ENCODE measurements at regions of chr7 and their contacts with region 1.

Region 1: DNA sequence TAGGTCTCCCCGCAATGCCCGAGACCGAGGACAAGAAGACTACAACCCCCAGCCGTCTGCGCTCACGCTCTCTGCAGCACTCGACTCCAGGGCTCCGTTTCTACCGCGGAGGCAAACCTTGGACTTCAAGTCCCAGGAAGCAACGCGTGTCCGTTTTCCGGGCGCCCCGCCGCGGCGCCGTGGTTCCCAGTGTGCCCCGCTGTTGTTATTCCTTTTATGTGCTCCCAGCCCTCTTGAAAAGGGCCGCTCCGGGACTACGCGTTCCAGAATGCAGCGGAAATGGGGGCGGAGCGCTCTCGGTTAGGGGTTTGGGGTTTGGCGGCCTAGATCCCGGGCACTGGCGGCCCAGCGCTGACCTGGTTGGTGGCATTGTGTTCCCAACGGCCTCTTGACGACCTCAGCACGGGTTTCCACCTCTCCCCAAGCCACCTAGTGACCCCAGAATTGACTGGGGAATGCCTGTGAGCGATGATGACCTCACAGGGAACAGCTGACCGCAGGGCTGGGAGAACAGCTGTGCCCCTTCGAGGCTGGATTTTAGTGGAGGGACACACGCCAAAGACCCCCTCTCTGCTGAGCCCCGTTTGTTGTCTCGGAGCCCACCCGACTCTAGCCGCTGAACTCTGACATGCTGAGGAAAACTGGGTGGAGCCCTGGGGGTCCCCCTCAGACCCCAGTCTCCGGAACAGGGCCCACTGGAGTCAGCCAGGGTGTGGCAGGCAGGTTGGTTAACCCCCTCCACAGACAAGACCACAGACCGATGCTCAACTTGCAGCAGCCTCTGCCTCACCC is 488 bp upstream of the CDK5 start:
- DNase-seq: peak; percentile 80 to 99 (median 97)
- ATAC-seq: peak; percentile 96
- H3K4me3 ChIP-seq: peak overlapping the region; percentile 78
- H3K4me3 Mint-ChIP-seq: peak overlapping the region; percentile 91 to 99 (median 94)
- H3K27ac ChIP-seq: peak overlapping the region; percentile 92
- H3K27ac Mint-ChIP-seq: peak overlapping the region; percentile 86 to 96 (median 93)
- H3K4me1 ChIP-seq: peaks cover 25 to 32% of the 10 kb centered on the region in 2 donors
- H3K4me1 Mint-ChIP-seq: peaks cover 25 to 41% (median 38%) of the 10 kb centered on the region in 7 donors
- H3K27me3 ChIP-seq: no peaks in the 10 kb centered on the region
- H3K27me3 Mint-ChIP-seq: no peaks in the 10 kb centered on the region

Region 2: GRCh38 chr7:149838224-149838947 is 1219.8 kb before region 1 on chr7 and contains the start of gene ZNF862:
- CTCF ChIA-PET with region 1: no interaction called
- POLR2A ChIA-PET with region 1: no interaction called
- intact Hi-C with region 1: loop called in 1 of 2 experiments (anchors 1 kb)
- DNase-seq: peak; percentile 84 to 96 (median 94)
- ATAC-seq: peak; percentile 99
- H3K4me3 ChIP-seq: peak within 1 kb of the TSS; percentile 67
- H3K4me3 Mint-ChIP-seq: peak within 1 kb of the TSS; percentile 85 to 97 (median 91)
- H3K27ac ChIP-seq: peak within 1 kb of the TSS; percentile 79
- H3K27ac Mint-ChIP-seq: peak within 1 kb of the TSS; percentile 77 to 96 (median 88)
- H3K4me1 ChIP-seq: peaks cover 12 to 22% of the 10 kb centered on the region in 2 donors
- H3K4me1 Mint-ChIP-seq: peaks cover 25 to 52% (median 48%) of the 10 kb centered on the region in 7 donors
- H3K27me3 ChIP-seq: no peaks in the 10 kb centered on the region
- H3K27me3 Mint-ChIP-seq: peaks cover 0 to 15% (median 3%) of the 10 kb centered on the region in 5 donors
- total RNA-seq, gene ZNF862: 36.9 to 112 (median 41.8) TPM

Region 3: GRCh38 chr7:150378853-150379440 is 679.2 kb before region 1 on chr7 and contains the start of gene ZNF775:
- CTCF ChIA-PET with region 1: no interaction called
- POLR2A ChIA-PET with region 1: no interaction called
- intact Hi-C with region 1: loop called in 1 of 2 experiments (anchors 2 kb)
- DNase-seq: peak; percentile 87 to 96 (median 90)
- ATAC-seq: peak; percentile 98
- H3K4me3 ChIP-seq: peak within 1 kb of the TSS; percentile 68
- H3K4me3 Mint-ChIP-seq: peak within 1 kb of the TSS; percentile 84 to 95 (median 90)
- H3K27ac ChIP-seq: peak within 1 kb of the TSS; percentile 91
- H3K27ac Mint-ChIP-seq: peak within 1 kb of the TSS; percentile 61 to 95 (median 86)
- H3K4me1 ChIP-seq: peaks cover 4 to 30% of the 10 kb centered on the region in 2 donors
- H3K4me1 Mint-ChIP-seq: peaks cover 32 to 57% (median 46%) of the 10 kb centered on the region in 7 donors
- H3K27me3 ChIP-seq: no peaks in the 10 kb centered on the region
- H3K27me3 Mint-ChIP-seq: no peaks in the 10 kb centered on the region
- total RNA-seq, gene ZNF775: 1.1 to 5.7 (median 4.3) TPM

Region 4: DNA sequence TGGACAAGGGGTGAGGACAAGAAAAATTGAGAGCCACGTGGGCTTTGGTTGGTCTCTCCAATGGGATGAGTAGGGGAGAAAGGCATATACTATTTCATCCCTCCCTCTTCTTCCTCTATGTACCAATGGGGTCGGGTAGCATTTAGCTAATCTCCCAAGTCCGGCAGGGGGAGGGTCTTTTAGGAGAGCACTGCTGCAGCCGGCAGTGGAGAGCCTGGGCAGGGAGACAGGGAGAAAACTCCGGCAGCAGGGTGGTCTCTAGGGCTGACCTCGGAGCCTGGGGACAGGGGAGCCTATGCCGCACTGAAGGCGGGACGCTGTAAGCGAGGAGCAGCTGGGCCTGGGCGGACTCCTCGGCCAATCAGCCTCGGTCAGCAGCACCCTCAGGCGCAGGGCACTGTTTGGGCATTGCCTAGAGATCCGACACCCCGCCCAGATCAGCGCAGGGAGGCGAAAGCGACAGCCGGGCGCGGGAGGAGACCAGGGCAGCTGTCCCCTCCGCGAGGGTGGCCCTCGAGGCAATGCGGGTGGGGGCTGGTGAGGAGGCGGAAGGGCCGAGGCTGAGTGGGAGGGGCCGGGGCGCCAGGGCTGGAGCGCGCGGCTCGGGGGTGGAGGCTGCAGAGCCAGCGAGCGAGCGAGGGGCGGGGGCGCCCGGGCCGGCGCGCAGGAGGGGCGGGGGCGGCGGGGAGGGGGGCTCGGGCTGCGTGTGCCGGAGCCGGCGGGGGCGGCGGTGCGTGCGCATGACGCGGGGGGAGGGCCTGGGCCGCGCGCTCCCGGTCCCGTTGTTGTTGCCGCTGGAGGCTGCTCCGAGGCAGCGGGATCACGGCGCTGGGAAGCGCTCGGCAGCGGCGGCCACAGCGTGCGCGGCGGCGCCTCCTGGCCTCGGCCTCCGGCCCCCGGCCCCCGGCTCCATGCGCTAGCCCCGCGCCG is 27.8 kb after region 1 on chr7 and contains the start of gene AGAP3:
- CTCF ChIA-PET with region 1: interaction called, 15 read pairs
- POLR2A ChIA-PET with region 1: interaction called, 14 read pairs
- intact Hi-C with region 1: loop called in 1 of 2 experiments (anchors 5 kb)
- DNase-seq: peak; percentile 41 to 75 (median 50)
- ATAC-seq: peak; percentile 23
- H3K4me3 ChIP-seq: peak within 1 kb of the TSS; percentile 68
- H3K4me3 Mint-ChIP-seq: peak within 1 kb of the TSS; percentile 87 to 97 (median 92)
- H3K27ac ChIP-seq: peak within 1 kb of the TSS; percentile 68
- H3K27ac Mint-ChIP-seq: peak within 1 kb of the TSS; percentile 56 to 96 (median 87)
- H3K4me1 ChIP-seq: peaks cover 36 to 41% of the 10 kb centered on the region in 2 donors
- H3K4me1 Mint-ChIP-seq: peaks cover 31 to 55% (median 41%) of the 10 kb centered on the region in 7 donors
- H3K27me3 ChIP-seq: no peaks in the 10 kb centered on the region
- H3K27me3 Mint-ChIP-seq: peaks cover 0 to 14% (median 0%) of the 10 kb centered on the region in 5 donors
- total RNA-seq, gene AGAP3: 27.4 to 70.6 (median 37.2) TPM

Region 5: GRCh38 chr7:151110941-151111645 is 52.9 kb after region 1 on chr7:
- CTCF ChIA-PET with region 1: interaction called, 4 read pairs
- POLR2A ChIA-PET with region 1: interaction called, 3 read pairs
- intact Hi-C with region 1: loop called (anchors 1 to 2 kb)
- DNase-seq: peak; percentile 41 to 79 (median 71)
- ATAC-seq: peak; percentile 82
- H3K4me3 ChIP-seq: no peak overlapping the region
- H3K4me3 Mint-ChIP-seq: peak overlapping the region in 1 of 10 donors; percentile 29
- H3K27ac ChIP-seq: no peak overlapping the region
- H3K27ac Mint-ChIP-seq: no peak overlapping the region
- H3K4me1 ChIP-seq: no peaks in the 10 kb centered on the region
- H3K4me1 Mint-ChIP-seq: peaks cover 0 to 9% (median 4%) of the 10 kb centered on the region in 7 donors
- H3K27me3 ChIP-seq: peaks cover 0 to 4% of the 10 kb centered on the region in 2 donors
- H3K27me3 Mint-ChIP-seq: peaks cover 0 to 20% (median 0%) of the 10 kb centered on the region in 5 donors